RWPE1 (cell line): ENCODE measurements at regions of chr2 and their contacts with region 1.

Region 1: DNA sequence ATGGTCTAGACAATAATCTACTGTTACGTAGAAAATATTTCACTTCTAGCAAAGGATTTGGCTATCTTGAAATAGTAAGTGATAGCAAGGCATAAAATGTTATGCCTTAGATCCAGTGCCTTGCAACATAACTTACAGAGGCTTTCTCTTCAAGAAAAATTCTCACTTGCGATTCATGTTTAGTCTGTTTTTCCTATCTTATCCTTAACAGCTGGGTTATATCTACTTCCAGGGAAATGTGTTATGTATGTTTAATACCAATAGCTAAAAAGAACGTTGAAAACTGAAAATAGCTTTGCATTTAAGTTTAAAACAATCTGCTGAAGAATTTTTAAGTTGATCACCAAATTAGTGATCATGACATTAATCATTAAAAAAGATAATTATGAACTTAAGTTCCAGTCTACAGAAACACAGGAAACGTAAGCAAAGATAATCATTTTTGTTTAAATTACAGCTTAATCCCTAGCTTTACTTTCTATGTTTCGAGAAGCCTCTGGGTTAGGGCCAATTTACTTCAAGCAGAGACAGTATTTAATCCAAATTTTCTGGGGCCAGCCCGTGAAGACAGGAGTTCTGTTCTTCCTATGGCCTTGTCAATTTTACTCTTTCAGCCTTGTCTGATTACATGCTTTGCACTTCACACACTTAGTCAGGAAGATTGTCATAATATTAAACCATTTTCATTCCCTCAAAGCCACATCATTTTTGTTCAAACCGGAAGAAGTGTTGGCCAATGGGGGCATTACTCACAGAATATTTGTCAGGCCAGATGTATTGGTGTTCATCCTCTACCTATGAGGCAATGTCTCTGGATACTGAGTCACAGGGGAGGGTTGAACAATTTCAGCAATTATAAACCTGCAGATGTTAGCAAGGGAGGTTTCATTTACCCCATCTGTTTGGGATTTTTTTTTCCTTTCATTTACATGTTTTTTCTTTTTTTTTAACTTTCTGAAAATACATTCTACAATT is 1132.9 kb upstream of the ZEB2 start:
- DNase-seq: peak; percentile 72
- H3K27ac ChIP-seq: no peak overlapping the region
- CTCF ChIP-seq: no peak

Region 2: GRCh38 chr2:144876013-144876412 is 776.8 kb before region 1 on chr2:
- CTCF ChIA-PET with region 1: interaction called, 10 read pairs
- POLR2A ChIA-PET with region 1: no interaction called
- DNase-seq: no peak
- H3K27ac ChIP-seq: no peak overlapping the region
- CTCF ChIP-seq: no peak

Region 3: GRCh38 chr2:145356056-145356455 is 296.8 kb before region 1 on chr2:
- CTCF ChIA-PET with region 1: no interaction called
- POLR2A ChIA-PET with region 1: no interaction called
- DNase-seq: no peak
- H3K27ac ChIP-seq: no peak overlapping the region
- CTCF ChIP-seq: no peak

Region 4: GRCh38 chr2:145638675-145639074 is 14.2 kb before region 1 on chr2:
- CTCF ChIA-PET with region 1: no interaction called
- POLR2A ChIA-PET with region 1: no interaction called
- DNase-seq: no peak
- H3K27ac ChIP-seq: no peak overlapping the region
- CTCF ChIP-seq: no peak

Region 5: GRCh38 chr2:145822892-145823534 is 170.2 kb after region 1 on chr2:
- CTCF ChIA-PET with region 1: no interaction called
- POLR2A ChIA-PET with region 1: no interaction called
- DNase-seq: no peak
- H3K27ac ChIP-seq: no peak overlapping the region
- CTCF ChIP-seq: no peak